Mammary epithelial cell (primary cell): ENCODE measurements at regions of chr4 and their contacts with region 1.

Region 1: DNA sequence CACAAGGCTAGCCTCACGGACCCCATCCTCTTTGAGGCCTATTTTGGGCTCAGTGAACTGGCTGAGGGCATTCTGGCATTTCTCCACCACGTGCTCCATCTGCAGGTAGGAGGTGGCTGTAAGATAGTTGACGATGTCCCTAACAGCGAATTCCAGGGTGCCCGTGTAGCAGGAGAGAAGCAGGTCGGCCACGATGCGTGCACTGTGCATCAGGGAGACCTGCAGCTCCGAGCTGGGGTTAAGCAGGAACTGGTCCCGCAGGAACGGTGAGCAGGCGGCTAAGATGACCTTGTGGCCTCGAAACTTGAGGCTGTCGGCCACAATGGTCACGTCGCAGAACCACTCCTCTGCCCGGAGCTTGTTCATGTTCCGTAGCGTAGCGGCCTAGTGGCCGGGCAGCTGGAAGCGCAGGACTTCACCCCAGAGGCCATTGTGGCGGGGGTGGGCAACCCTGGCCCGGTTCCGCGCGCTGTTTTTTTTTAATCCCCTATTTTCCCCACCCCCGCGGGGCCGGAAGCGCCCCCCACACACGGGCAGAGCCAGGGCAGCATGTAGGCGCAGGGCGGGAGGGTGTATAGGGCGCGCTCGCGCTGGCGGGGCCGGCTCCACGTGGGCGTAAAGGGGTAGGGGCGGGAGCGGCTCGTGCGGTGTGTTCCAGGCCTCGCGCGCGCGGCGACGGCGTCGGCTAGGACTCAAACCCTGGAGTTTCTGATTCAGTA is 73.2 kb downstream of the UBE2K start:
- DNase-seq: no peak
- H3K4me3 ChIP-seq: no peak overlapping the region
- H3K27ac ChIP-seq: no peak overlapping the region
- H3K4me1 ChIP-seq: no peaks in the 10 kb centered on the region
- H3K27me3 ChIP-seq: no peaks in the 10 kb centered on the region
- CTCF ChIP-seq: no peak

Region 2: GRCh38 chr4:39823191-39823590 is 52.0 kb after region 1 on chr4:
- CTCF ChIA-PET with region 1: no interaction called
- dilution Hi-C with region 1: loop called (anchors 5 kb)
- in situ Hi-C with region 1: no loop called
- intact Hi-C with region 1: no loop called
- DNase-seq: no peak
- H3K4me3 ChIP-seq: no peak overlapping the region
- H3K27ac ChIP-seq: no peak overlapping the region
- H3K4me1 ChIP-seq: no peaks in the 10 kb centered on the region
- H3K27me3 ChIP-seq: no peaks in the 10 kb centered on the region
- CTCF ChIP-seq: no peak

Region 3: GRCh38 chr4:39873823-39874222 is 102.7 kb after region 1 on chr4:
- CTCF ChIA-PET with region 1: no interaction called
- dilution Hi-C with region 1: no loop called
- in situ Hi-C with region 1: no loop called
- intact Hi-C with region 1: no loop called
- DNase-seq: no peak
- H3K4me3 ChIP-seq: no peak overlapping the region
- H3K27ac ChIP-seq: no peak overlapping the region
- H3K4me1 ChIP-seq: no peaks in the 10 kb centered on the region
- H3K27me3 ChIP-seq: no peaks in the 10 kb centered on the region
- CTCF ChIP-seq: no peak